K562 (cell line): ENCODE measurements at regions of chr11 and their contacts with region 1.

Region 1: DNA sequence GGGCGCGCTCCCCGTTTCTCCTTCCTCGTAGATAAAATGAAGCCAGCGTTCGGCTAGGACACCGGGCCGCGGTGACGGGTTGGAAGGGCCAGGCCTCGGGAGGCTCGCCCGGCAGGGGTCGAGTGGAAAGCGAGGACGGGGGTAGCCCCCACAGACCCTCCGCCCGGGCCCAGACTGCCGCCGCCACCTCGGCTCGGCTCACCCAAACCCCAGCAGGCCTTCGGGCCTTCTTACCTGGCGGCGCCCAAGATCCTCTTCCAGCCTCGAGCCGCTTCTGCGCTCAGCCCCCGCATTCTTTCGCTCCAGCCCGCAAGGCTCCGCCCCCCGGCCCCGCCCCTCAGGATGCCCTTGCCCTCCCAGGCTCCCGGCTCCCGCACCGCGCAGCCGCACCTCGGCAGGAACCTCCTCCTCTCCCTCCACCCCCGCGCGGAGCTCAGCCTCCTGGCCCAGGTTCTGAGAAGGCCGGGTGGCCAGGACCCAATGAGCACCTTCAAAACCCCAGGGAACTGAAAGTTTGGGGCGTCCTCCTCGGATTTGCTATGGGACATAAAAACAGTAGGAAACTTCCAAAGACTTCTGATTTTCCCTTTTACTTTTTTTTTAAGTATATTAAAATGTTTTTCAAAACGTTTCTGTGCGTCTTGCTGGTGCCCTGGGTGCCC is at the start of gene CD59:
- DNase-seq: peak; percentile 96 to 98 (median 96)
- ATAC-seq: peak; percentile 87
- H3K4me3 ChIP-seq: peak within 1 kb of the TSS; percentile 79
- H3K27ac ChIP-seq: peak within 1 kb of the TSS; percentile 90
- H3K4me1 ChIP-seq: peaks cover 16 to 53% of the 10 kb centered on the region in 2 experiments; a peak in 4 of 5 replicates
- H3K27me3 ChIP-seq: no peaks in the 10 kb centered on the region
- CTCF ChIP-seq: no peak
- EP300 ChIP-seq: no peak
- POLR2A ChIP-seq: peak; percentile 87
- RAD21 ChIP-seq: no peak
- polyA plus RNA-seq, gene CD59: 283 to 287 TPM

Region 2: DNA sequence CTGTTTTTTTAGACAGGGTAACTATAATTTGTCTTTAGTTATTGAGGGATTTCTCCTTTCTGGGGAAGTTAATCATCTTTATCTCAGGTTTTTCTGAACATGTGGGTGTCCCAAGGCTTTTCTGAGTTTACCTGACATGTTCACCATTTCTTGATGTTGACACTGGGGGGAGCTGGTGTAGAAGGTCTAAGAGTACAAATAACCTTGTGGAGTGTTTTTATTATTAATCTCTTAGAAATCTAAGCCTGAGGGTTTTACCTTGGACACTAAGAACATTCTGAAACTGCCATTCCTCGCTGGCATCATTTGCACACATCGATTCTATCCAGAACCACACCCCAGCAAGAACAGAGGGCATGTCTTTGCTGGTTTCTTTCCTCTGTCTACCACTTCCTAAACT is 20.0 kb before region 1 on chr11:
- CTCF ChIA-PET with region 1: interaction called, 6 read pairs
- POLR2A ChIA-PET with region 1: interaction called, 18 read pairs
- in situ Hi-C with region 1: no loop called
- intact Hi-C with region 1: no loop called
- DNase-seq: peak in 3 of 4 experiments; percentile 24 to 59 (median 27)
- ATAC-seq: peak; percentile 79
- H3K4me3 ChIP-seq: no peak overlapping the region
- H3K27ac ChIP-seq: no peak overlapping the region
- H3K4me1 ChIP-seq: peaks cover 0 to 4% of the 10 kb centered on the region in 2 experiments; a peak in 3 of 5 replicates
- H3K27me3 ChIP-seq: no peaks in the 10 kb centered on the region
- CTCF ChIP-seq: peak; percentile 54 to 66 (median 55); a peak in 4 of 6 replicates
- EP300 ChIP-seq: no peak
- POLR2A ChIP-seq: no peak
- RAD21 ChIP-seq: peak; percentile 65 to 78

Region 3: DNA sequence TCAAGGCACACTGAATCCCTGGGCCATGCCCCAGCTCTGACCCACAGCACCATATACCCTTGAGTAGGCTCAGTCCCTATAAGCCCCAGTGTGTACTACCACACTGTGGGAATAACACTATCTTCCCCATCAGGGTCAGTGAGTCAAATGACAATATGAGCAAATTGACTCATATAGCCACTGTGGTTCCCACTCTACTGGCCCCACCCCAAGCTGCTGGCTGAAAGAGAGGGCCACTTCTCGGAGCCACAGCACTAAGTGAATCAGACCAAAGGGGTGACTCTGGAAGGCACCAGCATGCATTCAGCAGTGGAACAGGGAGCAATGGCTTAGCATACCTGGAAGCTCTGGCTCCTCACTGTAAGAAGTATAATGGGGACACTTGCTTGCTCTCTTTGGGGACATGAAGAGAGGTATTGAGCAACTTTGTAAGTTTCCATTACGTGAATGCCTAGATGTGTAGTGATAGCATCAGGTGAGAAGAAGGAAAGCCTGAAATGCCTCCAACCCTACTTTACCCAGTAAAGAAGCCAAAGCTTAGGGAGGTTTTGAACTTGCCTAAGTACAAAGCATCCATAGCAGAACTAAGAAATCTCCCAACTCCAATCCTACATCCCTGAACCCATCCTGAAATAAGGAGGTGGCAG is 13.6 kb before region 1 on chr11:
- CTCF ChIA-PET with region 1: no interaction called
- POLR2A ChIA-PET with region 1: interaction called, 10 read pairs
- in situ Hi-C with region 1: no loop called
- intact Hi-C with region 1: loop called (anchors 2 kb)
- DNase-seq: peak; percentile 40 to 73 (median 53)
- ATAC-seq: peak; percentile 71
- H3K4me3 ChIP-seq: no peak overlapping the region
- H3K27ac ChIP-seq: peak overlapping the region; percentile 64
- H3K4me1 ChIP-seq: peaks cover 24 to 36% of the 10 kb centered on the region in 2 experiments
- H3K27me3 ChIP-seq: no peaks in the 10 kb centered on the region
- CTCF ChIP-seq: no peak
- EP300 ChIP-seq: no peak
- POLR2A ChIP-seq: no peak
- RAD21 ChIP-seq: no peak

Region 4: GRCh38 chr11:33753304-33753967 is 17.2 kb after region 1 on chr11:
- CTCF ChIA-PET with region 1: no interaction called
- POLR2A ChIA-PET with region 1: interaction called, 11 read pairs
- in situ Hi-C with region 1: no loop called
- intact Hi-C with region 1: no loop called
- DNase-seq: no peak
- ATAC-seq: no peak
- H3K4me3 ChIP-seq: no peak overlapping the region
- H3K27ac ChIP-seq: no peak overlapping the region
- H3K4me1 ChIP-seq: no peaks in the 10 kb centered on the region
- H3K27me3 ChIP-seq: no peaks in the 10 kb centered on the region
- CTCF ChIP-seq: no peak
- EP300 ChIP-seq: no peak
- POLR2A ChIP-seq: no peak
- RAD21 ChIP-seq: no peak